Activated CD4-positive, alpha-beta memory T cell treated with anti-CD3 and anti-CD28 coated beads, Interleukin-2, amount 10 ng/mL, durations not matched to agents 7 days and 5 days (primary cell): ENCODE measurements at regions of chr10 and their contacts with region 1.

Region 1: DNA sequence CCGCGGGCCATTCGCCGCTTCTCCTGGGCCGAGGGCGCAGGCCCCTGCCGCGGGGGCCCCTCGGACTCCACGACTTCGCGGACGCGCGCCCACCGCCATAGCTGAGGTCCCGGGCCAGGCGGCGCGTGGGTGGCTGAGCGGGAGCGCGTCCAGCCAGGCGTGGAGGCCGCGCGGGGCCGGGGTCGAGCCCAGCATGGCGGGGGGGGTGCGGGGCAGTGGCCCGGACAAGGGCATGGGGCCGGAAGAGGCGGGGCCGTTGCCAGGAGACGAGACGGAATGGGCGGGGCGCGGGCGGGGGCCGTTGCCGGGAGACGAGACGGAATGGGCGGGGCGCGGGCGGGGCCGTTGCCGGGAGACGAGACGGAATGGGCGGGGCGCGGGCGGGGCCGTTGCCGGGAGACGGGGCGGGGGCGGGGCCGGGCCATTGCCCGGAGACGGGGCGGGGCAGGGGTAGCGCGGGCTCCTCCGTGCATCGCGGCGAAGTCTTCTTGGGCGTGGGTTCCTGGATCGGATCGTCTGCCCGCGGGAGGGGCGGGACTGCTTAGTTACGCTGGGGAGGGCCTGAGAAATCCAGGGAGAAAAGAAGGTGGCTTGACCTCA is 14.8 kb downstream of the ADAM8 start:
- DNase-seq: peak; percentile 88
- H3K4me3 Mint-ChIP-seq: peak overlapping the region; percentile 74
- H3K27ac Mint-ChIP-seq: peak overlapping the region; percentile 31
- H3K4me1 Mint-ChIP-seq: peaks cover 83% of the 10 kb centered on the region
- H3K27me3 Mint-ChIP-seq: no peaks in the 10 kb centered on the region

Region 2: GRCh38 chr10:133226251-133226808 is 35.5 kb before region 1 on chr10:
- CTCF ChIA-PET with region 1: interaction called, 15 read pairs
- POLR2A ChIA-PET with region 1: interaction called, 8 read pairs
- DNase-seq: peak; percentile 36
- H3K4me3 Mint-ChIP-seq: peak overlapping the region; percentile 73
- H3K27ac Mint-ChIP-seq: peak overlapping the region; percentile 78
- H3K4me1 Mint-ChIP-seq: peaks cover 32% of the 10 kb centered on the region
- H3K27me3 Mint-ChIP-seq: peaks cover 33% of the 10 kb centered on the region

Region 3: DNA sequence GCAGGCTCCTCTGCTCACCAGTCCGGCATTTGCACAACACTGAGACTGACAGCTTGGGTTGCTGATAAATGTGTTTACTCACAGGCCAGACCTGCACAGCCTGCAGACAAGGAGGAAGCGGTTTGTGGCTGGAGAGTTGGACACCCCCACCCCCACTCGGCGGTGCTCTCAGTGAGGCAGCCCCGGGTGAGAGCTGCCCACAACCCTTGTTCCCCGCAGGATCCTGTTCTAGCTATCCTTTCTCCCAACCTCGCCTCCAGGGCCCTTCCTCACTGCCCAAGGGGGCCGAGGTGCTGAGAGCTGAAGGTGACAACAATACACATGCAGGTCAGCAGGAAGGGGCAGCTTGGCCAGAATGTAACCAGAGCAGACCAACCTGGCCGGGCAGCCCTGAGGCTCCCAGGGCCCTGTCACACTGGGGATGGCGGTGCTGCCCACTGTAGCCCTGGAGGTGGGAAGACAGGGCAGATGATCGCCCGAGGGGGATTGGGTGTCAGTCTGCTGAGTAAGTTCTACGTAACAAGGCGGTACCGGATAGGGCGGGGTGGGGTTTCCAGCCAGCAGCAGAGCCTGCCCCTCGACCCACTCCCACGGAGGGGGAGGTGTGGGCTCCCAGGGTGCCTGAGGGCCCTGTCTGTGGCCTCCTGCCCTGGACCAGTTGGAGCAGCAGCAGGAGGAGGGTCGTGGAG is 16.9 kb after region 1 on chr10:
- CTCF ChIA-PET with region 1: interaction called, 16 read pairs
- POLR2A ChIA-PET with region 1: interaction called, 113 read pairs
- DNase-seq: peak; percentile 89
- H3K4me3 Mint-ChIP-seq: peak overlapping the region; percentile 71
- H3K27ac Mint-ChIP-seq: peak overlapping the region; percentile 97
- H3K4me1 Mint-ChIP-seq: peaks cover 36% of the 10 kb centered on the region
- H3K27me3 Mint-ChIP-seq: no peaks in the 10 kb centered on the region

Region 4: GRCh38 chr10:133308421-133309110 is 46.7 kb after region 1 on chr10 and contains the starts of genes TUBGCP2 and ZNF511:
- CTCF ChIA-PET with region 1: interaction called, 12 read pairs
- POLR2A ChIA-PET with region 1: interaction called, 18 read pairs
- DNase-seq: peak; percentile 89
- H3K4me3 Mint-ChIP-seq: peak within 1 kb of the TSS; percentile 95
- H3K27ac Mint-ChIP-seq: peak within 1 kb of the TSS; percentile 98
- H3K4me1 Mint-ChIP-seq: peaks cover 29% of the 10 kb centered on the region
- H3K27me3 Mint-ChIP-seq: no peaks in the 10 kb centered on the region
- total RNA-seq, gene TUBGCP2: 52.3 to 58.2 TPM
- total RNA-seq, gene ZNF511: 45.7 to 52.7 TPM